CD4-positive, alpha-beta memory T cell (primary cell): ENCODE measurements at regions of chr14 and their contacts with region 1.

Region 1: GRCh38 chr14:53152890-53153701 is at the start of gene DDHD1:
- DNase-seq: peak; percentile 84 to 89 (median 87)
- H3K4me3 ChIP-seq: peak within 1 kb of the TSS; percentile 87 to 90
- H3K4me3 Mint-ChIP-seq: peak within 1 kb of the TSS; percentile 95 to 100 (median 99)
- H3K27ac ChIP-seq: peak within 1 kb of the TSS; percentile 87
- H3K27ac Mint-ChIP-seq: peak within 1 kb of the TSS; percentile 98 to 99 (median 99)
- H3K4me1 ChIP-seq: peaks cover 46% of the 10 kb centered on the region
- H3K4me1 Mint-ChIP-seq: peaks cover 36 to 58% (median 45%) of the 10 kb centered on the region in 4 donors
- H3K27me3 ChIP-seq: no peaks in the 10 kb centered on the region
- H3K27me3 Mint-ChIP-seq: no peaks in the 10 kb centered on the region
- total RNA-seq, gene DDHD1: 47.0 to 53.5 TPM

Region 2: DNA sequence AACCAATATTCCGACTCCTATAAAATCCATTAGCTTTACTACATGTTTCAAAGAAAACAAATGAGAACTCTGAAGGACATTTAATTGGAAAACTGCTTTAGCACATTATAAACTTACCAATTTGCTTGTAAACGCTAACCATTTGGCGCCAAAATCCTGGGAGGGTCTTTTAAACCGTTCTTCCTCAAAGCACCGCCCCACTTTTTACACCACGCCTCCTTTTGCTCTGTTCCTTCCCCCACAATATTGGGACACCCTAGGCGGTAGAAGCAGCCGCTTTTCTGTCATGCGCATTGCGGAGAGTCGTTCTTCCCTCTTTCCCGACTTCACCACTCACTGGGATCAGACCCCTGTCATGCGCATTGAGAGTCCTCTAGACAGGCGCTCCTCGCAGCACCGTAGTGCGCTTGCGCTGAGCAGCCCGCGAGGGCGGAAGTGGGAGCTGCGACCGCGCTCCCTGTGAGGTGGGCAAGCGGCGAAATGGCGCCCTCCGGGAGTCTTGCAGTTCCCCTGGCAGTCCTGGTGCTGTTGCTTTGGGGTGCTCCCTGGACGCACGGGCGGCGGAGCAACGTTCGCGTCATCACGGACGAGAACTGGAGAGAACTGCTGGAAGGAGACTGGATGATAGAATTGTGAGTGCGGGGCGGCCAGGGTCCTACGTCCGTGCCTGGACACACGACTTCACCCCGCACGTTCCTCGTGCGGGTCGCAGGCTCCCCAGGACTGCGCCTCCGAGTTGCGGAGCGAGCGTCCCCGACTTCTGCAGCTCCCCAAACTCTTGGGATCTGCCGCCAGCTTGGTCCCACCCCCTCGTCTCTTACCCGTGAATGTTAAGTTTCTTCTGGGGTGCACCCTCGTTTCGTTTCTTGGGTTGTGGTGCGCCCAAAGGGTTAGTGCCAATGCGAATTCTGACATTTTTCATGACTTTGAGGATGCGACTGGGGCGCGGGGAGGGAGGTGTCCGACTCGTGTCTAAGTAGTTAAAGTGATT is 1913.0 kb before region 1 on chr14 and contains the start of gene TMX1:
- CTCF ChIA-PET with region 1: no interaction called
- POLR2A ChIA-PET with region 1: interaction called, 3 read pairs
- intact Hi-C with region 1: loop called (anchors 2 kb)
- DNase-seq: peak; percentile 80 to 86 (median 82)
- H3K4me3 ChIP-seq: peak within 1 kb of the TSS; percentile 84 to 99
- H3K4me3 Mint-ChIP-seq: peak within 1 kb of the TSS in 1 of 8 donors; percentile 37
- H3K27ac ChIP-seq: peak within 1 kb of the TSS; percentile 65
- H3K27ac Mint-ChIP-seq: no peak within 1 kb of the TSS
- H3K4me1 ChIP-seq: peaks cover 51% of the 10 kb centered on the region
- H3K4me1 Mint-ChIP-seq: peaks cover 15 to 29% (median 21%) of the 10 kb centered on the region in 4 donors
- H3K27me3 ChIP-seq: no peaks in the 10 kb centered on the region
- H3K27me3 Mint-ChIP-seq: no peaks in the 10 kb centered on the region
- total RNA-seq, gene TMX1: 28.5 to 32.9 TPM

Region 3: GRCh38 chr14:52695481-52696091 is 457.5 kb before region 1 on chr14 and contains the start of gene ERO1A:
- CTCF ChIA-PET with region 1: no interaction called
- POLR2A ChIA-PET with region 1: interaction called, 12 read pairs
- intact Hi-C with region 1: loop called (anchors 10 kb)
- DNase-seq: peak; percentile 56 to 71 (median 60)
- H3K4me3 ChIP-seq: peak within 1 kb of the TSS; percentile 96 to 99
- H3K4me3 Mint-ChIP-seq: peak within 1 kb of the TSS; percentile 98 to 100 (median 99)
- H3K27ac ChIP-seq: peak within 1 kb of the TSS; percentile 81
- H3K27ac Mint-ChIP-seq: peak within 1 kb of the TSS; percentile 88 to 99 (median 98)
- H3K4me1 ChIP-seq: peaks cover 39% of the 10 kb centered on the region
- H3K4me1 Mint-ChIP-seq: peaks cover 26 to 47% (median 40%) of the 10 kb centered on the region in 4 donors
- H3K27me3 ChIP-seq: no peaks in the 10 kb centered on the region
- H3K27me3 Mint-ChIP-seq: no peaks in the 10 kb centered on the region
- total RNA-seq, gene ERO1A: 93.8 to 98.3 TPM

Region 4: DNA sequence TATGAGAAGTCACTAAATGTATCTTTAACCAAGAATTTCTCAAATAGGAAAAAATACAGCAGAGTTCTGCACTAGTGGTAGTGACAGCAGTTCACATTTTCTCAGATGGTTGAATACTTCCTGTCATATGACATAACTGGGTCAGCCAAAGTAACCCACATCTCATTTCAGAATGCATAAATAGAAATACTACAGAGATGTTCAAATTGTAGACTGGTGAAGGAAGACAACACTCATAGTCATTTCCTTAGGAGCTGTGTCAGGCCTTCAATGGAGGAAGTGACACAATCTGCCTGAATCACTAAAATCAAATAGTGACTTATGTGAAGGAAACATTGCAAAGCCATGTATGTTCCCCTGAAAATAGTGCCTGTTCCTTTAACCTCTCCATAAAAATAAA is 234.6 kb before region 1 on chr14:
- CTCF ChIA-PET with region 1: no interaction called
- POLR2A ChIA-PET with region 1: interaction called, 8 read pairs
- intact Hi-C with region 1: loop called (anchors 5 kb)
- DNase-seq: peak; percentile 55 to 82 (median 75)
- H3K4me3 ChIP-seq: no peak overlapping the region
- H3K4me3 Mint-ChIP-seq: peak overlapping the region in 3 of 8 donors; percentile 13 to 48 (median 15)
- H3K27ac ChIP-seq: peak overlapping the region; percentile 57
- H3K27ac Mint-ChIP-seq: peak overlapping the region; percentile 88 to 95 (median 93)
- H3K4me1 ChIP-seq: peaks cover 24% of the 10 kb centered on the region
- H3K4me1 Mint-ChIP-seq: peaks cover 18 to 42% (median 26%) of the 10 kb centered on the region in 4 donors
- H3K27me3 ChIP-seq: no peaks in the 10 kb centered on the region
- H3K27me3 Mint-ChIP-seq: no peaks in the 10 kb centered on the region

Region 5: GRCh38 chr14:53093206-53093605 is 59.9 kb before region 1 on chr14:
- CTCF ChIA-PET with region 1: no interaction called
- POLR2A ChIA-PET with region 1: interaction called, 10 read pairs
- intact Hi-C with region 1: no loop called
- DNase-seq: no peak
- H3K4me3 ChIP-seq: no peak overlapping the region
- H3K4me3 Mint-ChIP-seq: no peak overlapping the region
- H3K27ac ChIP-seq: no peak overlapping the region
- H3K27ac Mint-ChIP-seq: no peak overlapping the region
- H3K4me1 ChIP-seq: no peaks in the 10 kb centered on the region
- H3K4me1 Mint-ChIP-seq: peaks cover 3 to 6% (median 4%) of the 10 kb centered on the region in 4 donors
- H3K27me3 ChIP-seq: no peaks in the 10 kb centered on the region
- H3K27me3 Mint-ChIP-seq: no peaks in the 10 kb centered on the region

Region 6: GRCh38 chr14:53217295-53217994 is 64.3 kb after region 1 on chr14:
- CTCF ChIA-PET with region 1: interaction called, 9 read pairs
- POLR2A ChIA-PET with region 1: interaction called, 24 read pairs
- intact Hi-C with region 1: loop called (anchors 2 kb)
- DNase-seq: peak; percentile 65 to 77 (median 71)
- H3K4me3 ChIP-seq: peak overlapping the region; percentile 32 to 58
- H3K4me3 Mint-ChIP-seq: peak overlapping the region; percentile 88 to 93 (median 89)
- H3K27ac ChIP-seq: peak overlapping the region; percentile 40
- H3K27ac Mint-ChIP-seq: peak overlapping the region; percentile 14 to 83 (median 56)
- H3K4me1 ChIP-seq: peaks cover 4% of the 10 kb centered on the region
- H3K4me1 Mint-ChIP-seq: peaks cover 5 to 13% (median 9%) of the 10 kb centered on the region in 4 donors
- H3K27me3 ChIP-seq: no peaks in the 10 kb centered on the region
- H3K27me3 Mint-ChIP-seq: no peaks in the 10 kb centered on the region